ENCODE measurements at regions of chr3 and their contacts with region 1.

Region 1: DNA sequence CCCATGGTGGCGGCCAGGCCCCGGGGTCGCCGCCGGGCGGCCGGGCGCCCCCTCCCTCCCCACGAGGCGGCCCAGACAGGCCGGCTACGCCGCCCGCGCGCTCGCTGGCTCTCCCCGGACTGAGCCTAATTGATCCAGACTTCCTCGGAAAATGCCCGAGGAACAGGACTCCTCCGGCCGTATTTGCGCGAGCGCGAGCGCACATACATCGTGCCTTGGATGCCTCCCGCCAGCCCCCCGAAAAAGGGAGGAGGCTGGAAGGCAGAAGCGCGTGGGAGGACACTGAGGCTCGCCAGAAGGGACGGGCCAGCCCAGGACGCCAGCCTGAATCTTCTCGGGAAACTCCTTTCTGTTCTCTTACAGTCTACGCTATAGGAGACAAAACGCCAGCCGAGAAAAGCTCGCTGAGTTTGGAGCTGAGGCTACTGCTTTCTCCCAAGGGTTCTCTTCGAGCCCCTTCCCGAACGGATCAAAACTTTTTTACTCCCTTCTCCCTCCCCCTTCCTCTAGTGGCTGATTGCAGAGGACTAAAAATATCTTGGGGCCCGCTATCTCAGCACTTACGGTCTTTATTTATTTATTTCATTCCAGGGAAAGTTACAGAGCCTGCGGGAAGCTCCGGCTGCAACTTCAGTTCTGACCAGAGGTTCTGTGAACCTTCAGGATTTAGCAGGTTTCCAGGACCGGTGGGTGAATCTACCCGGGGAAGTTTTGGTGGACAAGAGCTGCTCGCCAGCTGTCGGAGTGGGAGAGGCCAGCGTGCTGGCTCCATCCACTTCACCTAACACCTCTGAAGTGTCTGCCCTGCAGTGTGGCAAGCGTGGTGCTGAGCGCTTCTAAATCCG is at the start of gene PDZRN3:
- DNase-seq: peak; percentile 55 to 90
- H3K4me3 ChIP-seq: peak within 1 kb of the TSS; percentile 64 to 68 (median 64)
- H3K27ac ChIP-seq: peak within 1 kb of the TSS; percentile 82 to 92 (median 85)
- H3K4me1 ChIP-seq: peaks cover 3 to 65% (median 19%) of the 10 kb centered on the region in 4 donors
- H3K27me3 ChIP-seq: peaks cover 0 to 17% (median 0%) of the 10 kb centered on the region in 3 donors
- CTCF ChIP-seq: no peak
- EP300 ChIP-seq: no peak
- POLR2A ChIP-seq: no peak
- total RNA-seq, gene PDZRN3: 57.1 to 174 (median 80.6) TPM

Region 2: GRCh38 chr3:73471986-73472787 is 152.9 kb before region 1 on chr3:
- intact Hi-C with region 1: no loop called
- DNase-seq: peak in 1 of 2 donors; percentile 55
- H3K4me3 ChIP-seq: no peak overlapping the region
- H3K27ac ChIP-seq: peak overlapping the region in 2 of 5 donors; percentile 40 to 43
- H3K4me1 ChIP-seq: peaks cover 4 to 44% (median 18%) of the 10 kb centered on the region in 4 donors
- H3K27me3 ChIP-seq: no peaks in the 10 kb centered on the region
- CTCF ChIP-seq: no peak
- EP300 ChIP-seq: no peak
- POLR2A ChIP-seq: no peak

Region 3: GRCh38 chr3:73511571-73512525 is 113.2 kb before region 1 on chr3:
- intact Hi-C with region 1: loop called (anchors 10 kb)
- DNase-seq: peak in 1 of 2 donors; percentile 77
- H3K4me3 ChIP-seq: no peak overlapping the region
- H3K27ac ChIP-seq: peak overlapping the region; percentile 37 to 88 (median 73)
- H3K4me1 ChIP-seq: peaks cover 8 to 84% (median 47%) of the 10 kb centered on the region in 4 donors
- H3K27me3 ChIP-seq: no peaks in the 10 kb centered on the region
- CTCF ChIP-seq: no peak
- EP300 ChIP-seq: no peak
- POLR2A ChIP-seq: no peak

Measured in stomach (tissue), 19 donors.